Posterior cingulate gyrus (tissue), 11 donors: ENCODE measurements at regions of chr1 and their contacts with region 1.

Region 1: DNA sequence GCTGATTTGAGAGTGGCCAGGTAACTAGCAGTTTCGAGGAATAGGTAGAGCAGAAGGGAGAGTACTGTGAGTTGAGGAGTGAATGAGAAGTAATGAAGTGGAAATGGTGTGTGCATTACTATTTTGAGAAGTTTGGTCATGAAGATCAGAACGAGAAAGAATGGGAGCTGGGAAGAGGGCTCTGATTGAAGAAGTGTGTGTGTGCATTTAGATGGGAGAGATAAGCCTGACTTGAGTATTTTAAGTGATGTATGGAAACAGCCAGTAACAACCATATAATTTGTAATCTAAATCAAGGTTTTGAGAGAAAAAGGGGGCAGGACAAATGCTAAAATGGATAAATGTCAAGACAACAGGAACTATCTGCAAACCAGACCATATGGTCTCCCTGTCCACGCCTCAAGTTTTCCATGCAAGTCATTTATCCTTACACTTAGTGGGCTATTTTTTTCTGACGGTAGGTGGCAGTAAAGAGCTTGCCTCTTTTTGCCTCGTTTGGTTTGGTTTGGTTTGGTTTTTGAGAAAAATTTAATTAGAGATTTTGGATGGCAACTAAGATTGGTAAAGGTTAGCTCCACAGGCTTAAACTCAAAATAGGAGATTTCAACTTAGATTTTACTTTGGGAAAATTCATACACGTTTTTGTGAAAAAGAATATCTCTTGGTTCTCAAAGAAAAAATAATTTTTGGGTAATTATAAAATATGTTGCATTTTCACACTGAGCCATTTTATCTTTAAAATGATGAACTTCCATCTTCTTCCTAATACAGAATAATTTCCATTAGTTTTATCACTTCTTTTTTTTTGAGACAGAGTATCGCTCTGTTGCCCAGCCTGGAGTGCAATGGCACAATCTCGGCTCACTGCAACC is 9.5 kb upstream of the B3GALNT2 start:
- DNase-seq: peak in 1 of 10 donors; percentile 25

Region 2: GRCh38 chr1:235375919-235376605 is 137.7 kb before region 1 on chr1:
- intact Hi-C with region 1: no loop called
- DNase-seq: no peak

Region 3: GRCh38 chr1:235553112-235553551 is 39.4 kb after region 1 on chr1:
- intact Hi-C with region 1: no loop called
- DNase-seq: no peak

Region 4: DNA sequence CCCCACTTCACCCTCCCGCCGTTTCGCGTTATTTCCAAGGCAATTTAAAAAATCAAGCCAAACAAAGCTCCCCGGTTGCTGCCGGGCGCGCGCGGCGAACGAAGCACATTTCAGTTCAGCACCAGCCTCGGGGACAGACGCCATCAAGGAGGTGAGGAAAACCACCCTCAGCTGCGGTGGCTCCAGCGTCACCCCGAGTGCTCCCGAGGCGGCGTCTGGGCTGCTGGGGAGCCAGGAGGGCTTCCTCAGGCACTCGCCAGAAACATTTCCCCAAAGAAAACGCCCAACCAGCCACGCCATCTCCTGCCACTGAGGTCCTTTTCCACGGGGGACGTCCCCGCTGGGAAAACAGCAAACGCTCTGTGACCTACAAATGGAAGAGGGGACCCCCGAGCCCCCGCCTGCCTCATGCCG is 135.2 kb after region 1 on chr1:
- intact Hi-C with region 1: loop called (anchors 10 kb)
- DNase-seq: peak in 4 of 10 donors; percentile 20 to 83 (median 54)

Region 5: DNA sequence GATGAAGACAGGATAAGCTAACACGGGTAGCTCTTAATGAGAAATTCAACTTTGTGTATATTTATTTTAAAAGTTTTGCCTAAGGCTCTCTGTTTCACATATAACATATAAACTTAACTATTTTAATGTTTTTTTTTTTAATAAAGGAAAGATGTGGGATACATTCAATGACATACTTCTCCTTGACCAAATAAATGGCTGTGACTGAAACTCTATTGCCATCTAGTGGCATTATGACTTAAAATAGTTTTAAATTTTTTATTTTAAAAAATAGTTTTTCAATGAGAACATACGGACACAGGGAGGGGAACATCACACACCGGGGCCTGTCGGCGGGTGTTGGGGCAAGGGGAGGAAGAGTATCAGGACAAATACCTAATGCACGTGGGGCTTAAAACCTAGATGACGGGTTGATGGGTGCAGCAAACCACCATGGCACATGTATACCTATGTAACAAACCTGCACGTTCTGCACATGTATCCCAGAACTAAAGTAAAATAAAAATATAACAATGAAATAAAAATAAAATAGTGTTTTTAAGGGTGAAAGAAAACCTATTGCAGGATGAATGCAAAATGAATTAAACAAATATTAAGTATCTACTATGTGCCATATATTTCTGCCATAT is 269.5 kb after region 1 on chr1:
- intact Hi-C with region 1: loop called (anchors 2 kb)
- DNase-seq: peak in 1 of 10 donors; percentile 25

Region 6: GRCh38 chr1:235971571-235972310 is 458.0 kb after region 1 on chr1:
- intact Hi-C with region 1: loop called (anchors 10 kb)
- DNase-seq: peak; percentile 68 to 96 (median 84)